ENCODE measurements at regions of chr12 and their contacts with region 1.

Region 1: GRCh38 chr12:1504304-1505114 is 89.9 kb downstream of the FBXL14 start:
- DNase-seq: no peak
- ATAC-seq: no peak
- H3K4me3 ChIP-seq: no peak overlapping the region
- H3K27ac ChIP-seq: no peak overlapping the region
- H3K4me1 ChIP-seq: no peaks in the 10 kb centered on the region
- H3K27me3 ChIP-seq: peaks cover 5 to 40% of the 10 kb centered on the region in 2 experiments
- CTCF ChIP-seq: no peak
- EP300 ChIP-seq: no peak
- POLR2A ChIP-seq: no peak
- RAD21 ChIP-seq: no peak

Region 2: DNA sequence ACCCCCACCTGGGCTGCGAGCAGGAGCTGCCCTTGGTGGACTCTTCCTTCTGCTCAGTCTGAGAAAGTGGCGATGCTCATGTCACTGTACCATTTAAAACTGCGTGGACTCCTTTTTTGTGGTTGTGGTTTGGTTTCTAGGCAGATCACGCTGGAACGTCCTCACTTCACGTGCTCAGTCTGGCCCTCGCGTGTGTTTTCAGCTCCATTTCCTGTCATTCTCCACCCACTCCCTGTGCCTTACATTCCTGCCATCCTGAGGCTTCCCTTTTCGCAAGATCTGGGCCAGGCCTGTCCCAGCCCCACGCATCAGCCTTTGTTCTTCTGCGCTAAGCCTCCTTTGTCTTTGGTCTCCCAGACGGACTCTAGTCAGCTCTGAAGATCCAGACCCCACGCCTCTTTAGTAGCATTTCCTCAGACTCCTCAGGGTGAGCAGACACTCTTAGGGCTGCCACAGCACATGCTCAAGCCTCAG is 15.6 kb before region 1 on chr12:
- CTCF ChIA-PET with region 1: no interaction called
- POLR2A ChIA-PET with region 1: no interaction called
- in situ Hi-C with region 1: no loop called
- intact Hi-C with region 1: loop called (anchors 1 kb)
- DNase-seq: no peak
- ATAC-seq: no peak
- H3K4me3 ChIP-seq: no peak overlapping the region
- H3K27ac ChIP-seq: no peak overlapping the region
- H3K4me1 ChIP-seq: no peaks in the 10 kb centered on the region
- H3K27me3 ChIP-seq: no peaks in the 10 kb centered on the region
- CTCF ChIP-seq: no peak
- EP300 ChIP-seq: no peak
- POLR2A ChIP-seq: no peak
- RAD21 ChIP-seq: no peak

Region 3: DNA sequence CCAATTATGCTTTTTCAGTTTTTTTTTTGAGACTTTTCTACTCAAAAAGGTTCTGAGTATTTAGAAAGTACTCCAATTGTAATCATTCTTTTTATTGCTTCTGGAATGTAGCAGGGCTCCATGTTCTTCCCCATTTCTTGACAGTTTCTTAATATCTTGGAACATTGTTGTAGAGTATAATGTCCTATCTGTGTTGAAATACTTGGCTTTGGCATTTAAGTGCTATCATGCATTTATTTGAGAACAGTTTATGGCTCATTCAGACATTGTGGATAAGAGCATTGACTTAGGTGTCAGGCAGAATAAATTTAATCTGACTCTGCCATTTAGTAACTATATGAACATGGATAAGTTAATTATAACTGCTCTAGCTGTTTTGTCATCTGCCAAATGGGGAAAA is 214.6 kb after region 1 on chr12:
- CTCF ChIA-PET with region 1: no interaction called
- POLR2A ChIA-PET with region 1: no interaction called
- in situ Hi-C with region 1: no loop called
- intact Hi-C with region 1: no loop called
- DNase-seq: no peak
- ATAC-seq: no peak
- H3K4me3 ChIP-seq: no peak overlapping the region
- H3K27ac ChIP-seq: no peak overlapping the region
- H3K4me1 ChIP-seq: peaks cover 84% of the 10 kb centered on the region
- H3K27me3 ChIP-seq: no peaks in the 10 kb centered on the region
- CTCF ChIP-seq: no peak
- EP300 ChIP-seq: no peak
- POLR2A ChIP-seq: no peak
- RAD21 ChIP-seq: no peak

Region 4: GRCh38 chr12:1916371-1917171 is 412.1 kb after region 1 on chr12:
- CTCF ChIA-PET with region 1: no interaction called
- POLR2A ChIA-PET with region 1: no interaction called
- in situ Hi-C with region 1: no loop called
- intact Hi-C with region 1: no loop called
- DNase-seq: no peak
- ATAC-seq: no peak
- H3K4me3 ChIP-seq: no peak overlapping the region
- H3K27ac ChIP-seq: no peak overlapping the region
- H3K4me1 ChIP-seq: peaks cover 18% of the 10 kb centered on the region; the same call in 1 of the 2 replicates
- H3K27me3 ChIP-seq: peaks cover 11 to 54% of the 10 kb centered on the region in 2 experiments
- CTCF ChIP-seq: no peak
- EP300 ChIP-seq: no peak
- POLR2A ChIP-seq: no peak
- RAD21 ChIP-seq: no peak